ENCODE measurements at regions of chr1 and their contacts with region 1.

Region 1: GRCh38 chr1:111507411-111508201 is 4.2 kb upstream of the ADORA3 start:
- DNase-seq: peak in 39 of 42 donors; percentile 24 to 77 (median 59)

Region 2: DNA sequence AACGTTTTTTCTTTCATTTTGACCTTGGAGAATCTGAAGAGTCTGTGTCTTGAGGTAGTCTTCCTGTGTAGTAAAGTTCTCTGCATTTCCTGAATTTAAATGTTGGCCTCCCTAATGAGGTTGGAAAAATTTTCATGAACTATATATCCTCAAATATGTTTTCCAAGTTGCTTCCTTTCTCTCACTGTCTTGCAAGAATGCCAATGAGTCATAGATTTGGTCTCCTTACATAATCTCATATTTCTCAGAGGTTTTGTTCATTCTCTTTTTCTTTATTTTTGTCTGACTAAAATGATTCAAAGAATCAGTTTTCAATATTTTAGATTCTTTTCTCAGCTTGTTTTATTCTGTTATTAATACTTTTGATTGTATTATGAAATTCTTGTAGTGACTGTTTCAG is 455.4 kb before region 1 on chr1:
- intact Hi-C with region 1: no loop called
- DNase-seq: no peak

Region 3: GRCh38 chr1:111654839-111655238 is 147.2 kb after region 1 on chr1:
- intact Hi-C with region 1: loop called (anchors 2 kb)
- DNase-seq: no peak